Ascending aorta (tissue), 2 donors: ENCODE measurements at regions of chr9 and their contacts with region 1.

Region 1: DNA sequence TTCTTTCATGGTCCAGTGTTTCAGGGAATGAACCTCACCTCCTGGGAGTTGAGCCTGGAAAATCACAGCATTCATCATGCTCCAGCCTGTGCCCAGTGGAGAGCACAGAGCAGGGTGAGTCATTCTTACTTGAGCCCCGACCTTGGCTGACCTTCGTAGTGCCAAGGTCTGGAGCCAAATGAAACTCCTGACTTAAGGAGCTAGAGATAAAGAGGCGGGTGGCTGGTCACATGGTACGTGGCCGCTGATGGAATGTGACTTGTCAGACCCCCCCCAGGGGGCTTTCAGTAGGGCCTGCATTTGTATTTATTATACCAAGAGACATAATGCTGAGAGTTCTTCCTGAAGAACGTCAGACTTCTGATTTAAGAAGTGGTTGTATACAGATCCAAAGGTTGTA is 15.0 kb upstream of the PIP5K1B start:
- DNase-seq: peak; percentile 22 to 85
- H3K4me3 ChIP-seq: no peak overlapping the region
- H3K27ac ChIP-seq: peak overlapping the region in 1 of 2 donors; percentile 35
- H3K4me1 ChIP-seq: peaks cover 0 to 6% of the 10 kb centered on the region in 2 donors
- H3K27me3 ChIP-seq: no peaks in the 10 kb centered on the region
- CTCF ChIP-seq: no peak

Region 2: GRCh38 chr9:68416936-68417564 is 273.0 kb before region 1 on chr9:
- intact Hi-C with region 1: no loop called
- DNase-seq: no peak
- H3K4me3 ChIP-seq: no peak overlapping the region
- H3K27ac ChIP-seq: no peak overlapping the region
- H3K4me1 ChIP-seq: peaks cover 0 to 3% of the 10 kb centered on the region in 2 donors
- H3K27me3 ChIP-seq: no peaks in the 10 kb centered on the region
- CTCF ChIP-seq: no peak

Region 3: GRCh38 chr9:68704814-68705530 is 14.9 kb after region 1 on chr9 and contains the start of gene PIP5K1B:
- intact Hi-C with region 1: loop called (anchors 2 kb)
- DNase-seq: peak in 1 of 2 donors; percentile 72
- H3K4me3 ChIP-seq: peak within 1 kb of the TSS; percentile 78 to 88
- H3K27ac ChIP-seq: peak within 1 kb of the TSS; percentile 30 to 81
- H3K4me1 ChIP-seq: no peaks in the 10 kb centered on the region
- H3K27me3 ChIP-seq: no peaks in the 10 kb centered on the region
- CTCF ChIP-seq: peak in 1 of 3 experiments; percentile 21
- total RNA-seq, gene PIP5K1B: 0.85 TPM

Region 4: DNA sequence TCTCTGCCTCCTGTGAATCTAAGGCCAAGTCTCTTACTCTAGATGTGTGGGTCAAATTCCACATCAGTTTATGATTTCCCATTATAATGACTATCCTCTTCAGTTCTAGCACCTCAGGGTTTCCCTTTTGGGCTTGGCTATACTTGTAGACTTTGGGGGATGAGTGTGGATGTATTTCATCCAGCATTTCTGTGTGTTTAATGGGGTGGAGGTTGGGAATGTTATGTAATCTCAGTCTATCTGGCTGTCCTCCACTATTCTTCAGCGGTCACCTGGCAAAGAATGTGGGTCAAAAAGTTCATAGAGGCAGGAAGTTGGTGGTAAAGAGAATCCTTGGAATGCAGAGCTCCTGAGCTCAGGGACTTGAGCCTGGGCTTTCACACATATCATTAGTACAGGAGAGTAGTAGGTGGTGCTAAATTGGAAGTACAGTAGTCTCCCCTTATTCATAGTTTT is 1195.4 kb after region 1 on chr9:
- intact Hi-C with region 1: no loop called
- DNase-seq: no peak
- H3K4me3 ChIP-seq: no peak overlapping the region
- H3K27ac ChIP-seq: no peak overlapping the region
- H3K4me1 ChIP-seq: no peaks in the 10 kb centered on the region
- H3K27me3 ChIP-seq: no peaks in the 10 kb centered on the region
- CTCF ChIP-seq: no peak